Heart right ventricle (tissue), 16 donors: ENCODE measurements at regions of chr5 and their contacts with region 1.

Region 1: DNA sequence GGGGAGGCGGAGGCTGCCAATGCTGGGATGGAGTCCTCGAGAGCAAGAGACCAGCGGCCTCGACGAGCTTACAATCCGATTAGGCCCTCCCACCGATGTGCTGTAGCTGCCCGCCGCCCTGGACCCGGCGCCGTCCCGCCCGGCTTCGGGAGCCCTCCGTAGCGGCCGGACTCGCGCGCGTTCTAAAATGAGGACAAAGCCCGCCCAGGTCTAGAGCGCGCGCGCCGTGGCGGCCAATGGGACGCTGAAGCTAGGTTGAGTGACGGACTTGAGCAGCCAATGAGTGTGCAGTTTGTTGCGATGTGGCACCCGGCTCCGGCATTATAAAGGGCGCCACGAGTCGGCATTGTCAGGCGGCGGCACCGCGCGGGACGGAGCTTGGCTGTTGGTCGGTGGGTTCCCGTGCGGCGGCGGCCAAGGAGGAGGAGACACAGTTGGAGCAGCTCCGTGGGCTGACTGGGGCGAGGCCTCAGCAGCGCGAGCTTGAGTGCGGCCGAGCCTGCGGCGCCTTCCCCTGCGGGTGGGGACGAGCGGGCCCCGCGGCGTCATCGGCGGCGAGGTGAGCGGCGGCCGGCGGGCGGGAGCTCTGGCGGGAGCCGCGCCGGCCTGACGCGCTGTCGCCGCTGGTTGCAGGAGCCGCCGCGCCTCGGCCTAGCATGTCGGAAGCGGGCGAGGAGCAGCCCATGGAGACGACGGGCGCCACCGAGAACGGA is at the start of gene HNRNPAB:
- DNase-seq: peak; percentile 92 to 95
- ATAC-seq: peak; percentile 92 to 97 (median 96)
- H3K4me3 ChIP-seq: peak within 1 kb of the TSS; percentile 70 to 100 (median 85)
- H3K27ac ChIP-seq: peak within 1 kb of the TSS; percentile 88 to 98 (median 95)
- H3K4me1 ChIP-seq: peaks cover 13 to 40% (median 30%) of the 10 kb centered on the region in 9 donors
- H3K27me3 ChIP-seq: no peaks in the 10 kb centered on the region
- CTCF ChIP-seq: no peak
- total RNA-seq, gene HNRNPAB: 70.8 to 132 (median 81.4) TPM

Region 2: DNA sequence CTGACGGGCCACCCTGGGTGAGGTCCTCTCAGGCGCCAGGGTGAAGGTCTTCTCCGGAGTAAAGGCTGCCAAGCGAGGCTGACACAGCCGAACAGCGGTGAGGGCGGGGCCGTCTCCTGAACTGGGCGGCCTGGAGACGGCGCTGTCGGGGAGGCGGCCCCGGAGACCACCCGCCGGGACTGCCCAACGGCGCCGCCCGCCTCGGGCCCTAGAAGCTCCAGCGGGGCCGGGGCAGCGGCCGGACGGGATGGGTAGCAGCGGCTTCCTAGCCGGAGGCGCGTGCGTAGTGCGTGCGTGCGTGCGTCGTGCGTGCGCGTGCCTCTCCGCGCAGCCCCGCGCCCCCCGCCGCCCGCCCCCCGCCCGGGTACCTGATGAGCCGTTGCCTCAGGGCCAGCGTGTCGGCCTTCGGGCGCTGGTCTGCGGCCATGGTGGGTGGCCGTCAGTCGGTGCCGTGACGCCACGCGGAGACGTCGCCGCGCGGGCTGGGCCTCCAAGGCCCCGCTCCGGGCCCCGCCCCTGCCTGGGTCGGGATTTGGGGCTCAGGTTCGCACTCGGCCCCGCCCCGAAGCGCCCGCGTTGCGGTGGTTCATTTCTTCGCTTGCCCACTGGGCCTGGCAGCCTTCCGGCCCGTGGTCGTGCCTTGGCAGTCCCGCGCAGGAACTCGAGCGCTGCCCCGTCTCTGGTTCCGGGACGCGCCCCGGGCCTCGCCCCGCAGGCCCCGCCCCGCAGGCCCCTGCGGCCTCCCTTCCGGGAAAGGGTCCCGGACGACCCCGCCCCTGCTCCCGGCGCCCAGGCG is 28.0 kb after region 1 on chr5 and contains the start of gene PHYKPL:
- intact Hi-C with region 1: loop called in 3 of 10 experiments (anchors 1 to 2 kb)
- DNase-seq: peak; percentile 59 to 80
- ATAC-seq: peak; percentile 57 to 84 (median 70)
- H3K4me3 ChIP-seq: peak within 1 kb of the TSS; percentile 76 to 95 (median 91)
- H3K27ac ChIP-seq: peak within 1 kb of the TSS; percentile 84 to 100 (median 98)
- H3K4me1 ChIP-seq: peaks cover 20 to 72% (median 38%) of the 10 kb centered on the region in 9 donors
- H3K27me3 ChIP-seq: no peaks in the 10 kb centered on the region
- CTCF ChIP-seq: peak in 3 of 9 donors; percentile 22 to 34 (median 34)
- total RNA-seq, gene PHYKPL: 30.5 to 50.6 (median 37.3) TPM